CD14-positive monocyte (primary cell): ENCODE measurements at regions of chr2 and their contacts with region 1.

Region 1: GRCh38 chr2:231084565-231084964 is 27.9 kb downstream of the PSMD1 start:
- DNase-seq: no peak
- H3K4me3 ChIP-seq: no peak overlapping the region
- H3K4me3 Mint-ChIP-seq: no peak overlapping the region
- H3K27ac ChIP-seq: no peak overlapping the region
- H3K27ac Mint-ChIP-seq: no peak overlapping the region
- H3K4me1 ChIP-seq: no peaks in the 10 kb centered on the region
- H3K4me1 Mint-ChIP-seq: peaks cover 2% of the 10 kb centered on the region
- H3K27me3 ChIP-seq: no peaks in the 10 kb centered on the region
- H3K27me3 Mint-ChIP-seq: no peaks in the 10 kb centered on the region
- CTCF ChIP-seq: no peak

Region 2: DNA sequence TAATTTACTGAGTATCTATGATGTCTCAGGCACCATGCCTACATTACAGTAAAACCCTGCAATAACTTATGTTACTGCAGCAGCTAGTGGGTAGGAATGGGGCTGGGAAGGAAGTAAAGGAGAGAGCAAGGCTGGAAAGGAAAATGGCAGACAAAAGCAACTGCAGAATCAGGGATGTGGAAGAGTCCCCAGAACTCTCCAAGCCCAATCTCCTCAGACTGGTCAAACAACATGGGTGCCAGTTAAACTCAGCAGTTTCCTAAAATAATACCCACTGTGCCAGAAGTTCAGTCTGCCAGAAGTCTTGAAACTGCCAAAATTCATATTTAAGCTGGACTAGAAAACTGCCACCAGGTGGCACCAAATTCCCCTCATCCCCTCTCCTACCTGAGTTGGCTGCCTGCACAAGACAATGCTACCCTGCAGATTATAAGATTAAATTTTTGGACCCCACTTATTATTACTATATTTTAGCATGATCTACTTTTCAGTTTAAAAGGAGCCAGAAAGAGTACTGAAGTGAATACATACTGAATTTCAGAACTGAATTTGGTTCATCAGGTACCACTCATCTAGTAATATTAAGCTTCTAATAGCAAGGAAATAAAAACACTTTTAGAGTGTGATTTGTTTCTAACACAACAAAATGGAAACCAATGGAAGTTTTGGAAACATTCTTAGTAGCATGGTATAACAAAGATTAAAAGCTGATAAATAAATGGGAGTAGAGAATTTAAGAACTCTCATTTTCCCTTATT is 1283.4 kb before region 1 on chr2:
- intact Hi-C with region 1: loop called in 1 of 2 experiments (anchors 10 kb)
- DNase-seq: peak; percentile 5 to 17 (median 9)
- H3K4me3 ChIP-seq: no peak overlapping the region
- H3K4me3 Mint-ChIP-seq: no peak overlapping the region
- H3K27ac ChIP-seq: peak overlapping the region in 1 of 2 donors; percentile 4
- H3K27ac Mint-ChIP-seq: no peak overlapping the region
- H3K4me1 ChIP-seq: no peaks in the 10 kb centered on the region
- H3K4me1 Mint-ChIP-seq: no peaks in the 10 kb centered on the region
- H3K27me3 ChIP-seq: no peaks in the 10 kb centered on the region
- H3K27me3 Mint-ChIP-seq: peaks cover 0 to 1% (median 0%) of the 10 kb centered on the region in 3 donors
- CTCF ChIP-seq: peak; percentile 80

Region 3: GRCh38 chr2:230999477-230999876 is 85.1 kb before region 1 on chr2:
- intact Hi-C with region 1: no loop called
- DNase-seq: no peak
- H3K4me3 ChIP-seq: no peak overlapping the region
- H3K4me3 Mint-ChIP-seq: no peak overlapping the region
- H3K27ac ChIP-seq: no peak overlapping the region
- H3K27ac Mint-ChIP-seq: no peak overlapping the region
- H3K4me1 ChIP-seq: no peaks in the 10 kb centered on the region
- H3K4me1 Mint-ChIP-seq: peaks cover 6% of the 10 kb centered on the region
- H3K27me3 ChIP-seq: peaks cover 3 to 10% of the 10 kb centered on the region in 2 donors
- H3K27me3 Mint-ChIP-seq: peaks cover 15 to 35% (median 19%) of the 10 kb centered on the region in 3 donors
- CTCF ChIP-seq: no peak

Region 4: DNA sequence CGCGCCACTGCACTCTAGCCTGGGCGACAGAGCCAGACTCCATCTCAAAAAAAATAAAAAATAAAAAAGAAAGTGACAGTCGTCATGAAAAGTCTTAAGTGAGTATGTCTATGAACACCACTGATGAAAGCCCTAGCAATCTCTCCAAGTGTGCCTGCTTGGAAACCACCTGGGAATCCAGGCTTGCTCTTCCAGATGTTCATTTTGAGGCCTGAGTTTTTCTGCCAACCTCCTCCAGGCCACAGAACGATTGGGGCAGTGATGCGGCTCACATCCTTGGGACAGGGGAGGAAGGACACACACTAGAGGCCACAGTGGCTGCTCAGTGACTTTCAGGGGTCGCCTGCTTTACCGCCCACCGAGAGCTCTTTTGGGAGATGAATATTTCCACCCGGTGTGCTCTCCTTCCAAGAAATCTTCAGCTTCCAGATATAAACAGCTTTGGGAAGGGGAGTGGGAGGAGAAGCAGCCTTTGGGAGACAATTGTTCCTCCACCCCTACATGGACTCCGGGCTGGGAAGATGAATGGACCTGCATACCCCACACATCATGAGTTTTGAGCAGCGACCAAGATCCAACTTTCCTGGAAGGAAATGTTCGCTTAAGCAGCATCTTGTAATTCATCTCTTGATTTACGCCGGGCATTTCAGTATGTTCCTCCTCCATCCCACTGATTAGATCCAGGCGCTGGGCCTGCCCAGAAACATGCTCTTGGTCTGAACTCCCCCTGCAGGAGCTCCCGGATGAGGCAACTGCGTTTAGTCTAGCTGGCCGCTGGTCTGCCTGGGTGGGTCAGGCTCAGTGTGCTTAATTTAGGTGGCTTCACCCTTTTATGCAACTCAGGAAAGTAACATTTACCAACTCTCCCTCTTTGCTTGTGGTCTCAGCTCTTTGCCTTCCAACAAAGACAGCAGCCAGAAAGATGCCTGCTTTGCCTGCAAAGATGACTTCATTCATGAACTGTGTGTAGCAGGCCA is 107.6 kb after region 1 on chr2:
- intact Hi-C with region 1: no loop called
- DNase-seq: no peak
- H3K4me3 ChIP-seq: no peak overlapping the region
- H3K4me3 Mint-ChIP-seq: peak overlapping the region in 1 of 2 donors; percentile 10
- H3K27ac ChIP-seq: no peak overlapping the region
- H3K27ac Mint-ChIP-seq: peak overlapping the region in 1 of 7 donors; percentile 23
- H3K4me1 ChIP-seq: peaks cover 5% of the 10 kb centered on the region in 2 donors
- H3K4me1 Mint-ChIP-seq: peaks cover 7% of the 10 kb centered on the region
- H3K27me3 ChIP-seq: peaks cover 0 to 13% of the 10 kb centered on the region in 2 donors
- H3K27me3 Mint-ChIP-seq: peaks cover 30 to 33% (median 32%) of the 10 kb centered on the region in 3 donors
- CTCF ChIP-seq: no peak